Right ventricle myocardium inferior (tissue), 1 donor: ENCODE measurements at regions of chr4 and their contacts with region 1.

Region 1: DNA sequence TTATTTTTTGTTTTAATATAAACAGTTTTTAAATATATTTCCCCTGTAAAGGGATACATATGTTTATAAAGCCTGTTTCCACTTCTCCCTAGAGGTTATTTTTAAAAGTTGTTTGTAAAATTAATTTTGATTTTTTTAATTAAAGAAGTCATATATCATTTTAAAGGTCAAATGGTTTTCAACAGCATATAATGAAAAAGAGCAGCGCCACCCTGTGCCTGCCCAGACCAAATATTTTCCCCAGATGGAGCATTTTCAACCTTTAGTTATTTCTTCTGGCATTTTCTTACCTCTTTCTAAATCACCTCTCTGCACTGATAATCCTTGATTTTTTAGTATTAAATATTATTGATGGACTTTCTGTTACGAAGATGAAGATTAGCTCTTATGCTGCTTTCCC is 21.0 kb downstream of the MSX1 start:
- DNase-seq: no peak
- ATAC-seq: no peak

Region 2: DNA sequence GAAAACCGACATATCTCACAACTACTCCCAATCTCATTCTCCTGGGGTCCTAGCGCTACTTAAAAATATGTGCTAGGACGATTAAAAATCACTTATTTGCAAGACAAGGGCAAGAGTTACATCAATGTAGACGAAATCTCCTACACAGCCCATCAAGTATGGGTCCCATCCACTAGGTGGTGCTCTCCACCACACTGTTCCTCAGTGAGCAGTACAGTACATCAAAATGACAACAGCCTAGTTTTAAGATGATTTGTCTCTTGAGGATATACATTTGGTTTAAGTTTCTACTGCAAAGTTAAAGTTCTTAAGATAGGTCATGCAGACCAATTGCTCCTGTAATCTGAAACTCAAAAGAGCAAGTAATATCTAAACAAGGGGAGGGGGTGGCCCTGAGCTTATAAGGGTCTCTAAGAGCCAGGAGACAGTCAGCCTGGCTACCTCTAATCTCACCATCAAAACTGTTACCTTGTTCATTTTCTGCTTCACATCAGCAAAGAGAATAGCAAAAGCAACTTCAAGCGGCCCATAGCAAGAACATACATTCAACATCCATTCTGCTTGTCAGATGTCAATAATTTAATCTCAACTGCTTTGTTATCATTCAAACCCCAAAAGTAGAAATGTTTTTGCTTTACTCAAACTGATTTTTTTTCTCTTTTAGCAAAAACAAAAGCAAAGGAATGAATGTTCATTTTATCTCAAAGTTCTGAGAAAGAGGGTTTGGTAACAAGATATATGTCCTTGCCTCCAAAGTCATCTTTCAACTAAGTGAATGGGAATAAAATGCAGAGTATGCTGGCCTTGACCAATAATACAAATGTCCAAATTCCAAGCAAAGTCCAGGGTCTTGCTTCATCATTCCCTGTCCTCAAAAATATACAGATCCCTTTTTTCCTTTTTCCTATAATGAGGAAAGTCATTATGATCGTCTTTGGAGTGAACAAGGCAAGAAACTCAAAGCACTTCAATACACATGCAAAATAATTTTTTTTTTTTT is 391.8 kb before region 1 on chr4:
- intact Hi-C with region 1: loop called (anchors 2 kb)
- DNase-seq: no peak
- ATAC-seq: peak; percentile 82

Region 3: GRCh38 chr4:4677556-4678522 is 202.7 kb before region 1 on chr4:
- intact Hi-C with region 1: loop called (anchors 5 kb)
- DNase-seq: no peak
- ATAC-seq: no peak